Tibial artery (tissue), 4 donors: ENCODE measurements at regions of chr9 and their contacts with region 1.

Region 1: GRCh38 chr9:105290398-105290797 is 45.9 kb downstream of the SLC44A1 start:
- DNase-seq: no peak
- H3K4me3 ChIP-seq: no peak overlapping the region
- H3K27ac ChIP-seq: no peak overlapping the region
- H3K4me1 ChIP-seq: peaks cover 0 to 22% (median 7%) of the 10 kb centered on the region in 4 donors
- H3K27me3 ChIP-seq: no peaks in the 10 kb centered on the region
- CTCF ChIP-seq: no peak

Region 2: GRCh38 chr9:104468261-104468660 is 822.1 kb before region 1 on chr9:
- intact Hi-C with region 1: no loop called
- DNase-seq: no peak
- H3K4me3 ChIP-seq: no peak overlapping the region
- H3K27ac ChIP-seq: no peak overlapping the region
- H3K4me1 ChIP-seq: no peaks in the 10 kb centered on the region
- H3K27me3 ChIP-seq: no peaks in the 10 kb centered on the region
- CTCF ChIP-seq: no peak

Region 3: GRCh38 chr9:105330755-105331154 is 40.4 kb after region 1 on chr9:
- intact Hi-C with region 1: loop called (anchors 2 kb)
- DNase-seq: no peak
- H3K4me3 ChIP-seq: no peak overlapping the region
- H3K27ac ChIP-seq: no peak overlapping the region
- H3K4me1 ChIP-seq: peaks cover 0 to 3% (median 0%) of the 10 kb centered on the region in 4 donors
- H3K27me3 ChIP-seq: no peaks in the 10 kb centered on the region
- CTCF ChIP-seq: no peak